PC-3 (cell line): ENCODE measurements at regions of chr14 and their contacts with region 1.

Region 1: GRCh38 chr14:51996148-51996746 is 6.9 kb downstream of the RTRAF start:
- DNase-seq: peak; percentile 58
- ATAC-seq: peak; percentile 50; the same call in 1 of the 2 replicates
- H3K4me3 ChIP-seq: no peak overlapping the region
- H3K27ac ChIP-seq: no peak overlapping the region
- H3K4me1 ChIP-seq: peaks cover 14% of the 10 kb centered on the region
- H3K27me3 ChIP-seq: no peaks in the 10 kb centered on the region
- CTCF ChIP-seq: peak; percentile 91

Region 2: GRCh38 chr14:51834240-51834639 is 162.0 kb before region 1 on chr14:
- CTCF ChIA-PET with region 1: no interaction called
- POLR2A ChIA-PET with region 1: no interaction called
- intact Hi-C with region 1: no loop called
- DNase-seq: no peak
- ATAC-seq: no peak
- H3K4me3 ChIP-seq: no peak overlapping the region
- H3K27ac ChIP-seq: no peak overlapping the region
- H3K4me1 ChIP-seq: peaks cover 17% of the 10 kb centered on the region
- H3K27me3 ChIP-seq: no peaks in the 10 kb centered on the region
- CTCF ChIP-seq: no peak

Region 3: GRCh38 chr14:52071675-52072074 is 75.4 kb after region 1 on chr14:
- CTCF ChIA-PET with region 1: no interaction called
- POLR2A ChIA-PET with region 1: no interaction called
- intact Hi-C with region 1: loop called (anchors 2 kb)
- DNase-seq: peak; percentile 44
- ATAC-seq: no peak
- H3K4me3 ChIP-seq: no peak overlapping the region
- H3K27ac ChIP-seq: no peak overlapping the region
- H3K4me1 ChIP-seq: peaks cover 17% of the 10 kb centered on the region
- H3K27me3 ChIP-seq: no peaks in the 10 kb centered on the region
- CTCF ChIP-seq: peak; percentile 54

Region 4: DNA sequence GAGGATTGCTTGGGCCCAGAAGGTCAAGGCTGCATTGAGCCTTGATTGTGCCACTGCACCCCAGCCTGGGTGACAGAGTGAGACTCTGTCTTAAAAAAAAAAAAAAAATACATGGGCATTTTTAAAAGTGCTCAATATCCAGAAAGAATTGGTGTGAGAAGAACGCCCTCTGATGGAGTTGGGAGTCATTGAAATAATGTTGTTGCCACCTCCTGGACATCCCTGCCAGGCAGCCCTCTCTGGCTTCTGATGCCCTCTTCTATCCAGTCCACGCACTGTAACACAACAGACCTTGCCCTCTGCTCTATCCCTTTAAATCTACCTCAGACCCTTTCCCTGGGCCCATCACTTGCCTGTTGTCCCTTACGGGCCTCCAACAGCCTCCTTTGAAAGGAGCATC is 276.1 kb after region 1 on chr14:
- CTCF ChIA-PET with region 1: no interaction called
- POLR2A ChIA-PET with region 1: no interaction called
- intact Hi-C with region 1: loop called (anchors 1 kb)
- DNase-seq: peak; percentile 80
- ATAC-seq: peak; percentile 85
- H3K4me3 ChIP-seq: no peak overlapping the region
- H3K27ac ChIP-seq: no peak overlapping the region
- H3K4me1 ChIP-seq: no peaks in the 10 kb centered on the region; the same call in 1 of the 2 replicates
- H3K27me3 ChIP-seq: peaks cover 23% of the 10 kb centered on the region
- CTCF ChIP-seq: peak; percentile 75

Region 5: GRCh38 chr14:52473557-52473956 is 477.3 kb after region 1 on chr14:
- CTCF ChIA-PET with region 1: no interaction called
- POLR2A ChIA-PET with region 1: no interaction called
- intact Hi-C with region 1: loop called (anchors 5 kb)
- DNase-seq: peak; percentile 78
- ATAC-seq: peak; percentile 79
- H3K4me3 ChIP-seq: no peak overlapping the region
- H3K27ac ChIP-seq: no peak overlapping the region
- H3K4me1 ChIP-seq: no peaks in the 10 kb centered on the region
- H3K27me3 ChIP-seq: no peaks in the 10 kb centered on the region
- CTCF ChIP-seq: peak; percentile 83